Mammary epithelial cell (primary cell): ENCODE measurements at regions of chr2 and their contacts with region 1.

Region 1: GRCh38 chr2:188524519-188525113 is 232.9 kb downstream of the GULP1 start:
- DNase-seq: peak; percentile 28
- H3K4me3 ChIP-seq: no peak overlapping the region
- H3K27ac ChIP-seq: no peak overlapping the region
- H3K4me1 ChIP-seq: no peaks in the 10 kb centered on the region
- H3K27me3 ChIP-seq: no peaks in the 10 kb centered on the region
- CTCF ChIP-seq: peak; percentile 61 to 63

Region 2: DNA sequence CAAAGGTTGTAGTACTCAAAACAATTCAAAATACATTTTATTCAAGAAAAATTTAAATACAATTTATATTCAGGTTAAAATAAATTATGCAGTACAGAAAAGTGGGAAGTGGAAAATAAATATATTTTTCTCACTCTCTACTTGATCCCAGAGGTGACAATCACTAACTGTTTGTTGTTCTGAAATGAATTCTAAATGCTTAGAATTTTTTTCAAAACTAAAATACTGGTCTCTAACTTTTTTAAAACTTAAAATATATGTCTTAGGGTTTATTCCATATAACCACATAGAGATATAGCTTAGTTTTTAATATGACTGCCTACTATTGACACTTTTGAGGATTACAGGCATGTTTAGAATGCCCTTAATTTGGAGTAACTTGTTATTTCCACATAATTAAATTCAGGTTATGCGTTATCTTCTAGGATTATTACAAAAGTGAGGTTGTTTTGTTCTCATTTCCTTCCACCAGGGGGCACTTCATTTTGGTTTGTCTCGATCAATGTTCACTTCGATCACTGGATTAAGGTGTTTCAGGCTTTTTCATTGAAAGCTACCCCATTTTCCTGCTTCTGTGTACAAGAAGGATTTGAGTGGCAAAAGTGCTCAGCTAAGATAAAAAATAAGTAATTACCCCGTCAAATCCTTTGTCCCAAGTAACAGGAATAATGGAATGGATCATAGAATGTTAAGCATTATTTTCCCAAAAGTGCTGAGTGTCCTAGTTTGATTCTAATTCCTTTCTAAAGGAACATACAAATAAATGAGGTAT is 943.3 kb before region 1 on chr2:
- CTCF ChIA-PET with region 1: no interaction called
- dilution Hi-C with region 1: no loop called
- in situ Hi-C with region 1: loop called in 1 of 2 experiments (anchors 25 kb)
- intact Hi-C with region 1: no loop called
- DNase-seq: peak; percentile 27
- H3K4me3 ChIP-seq: peak overlapping the region in 1 of 3 experiments; percentile 40
- H3K27ac ChIP-seq: no peak overlapping the region
- H3K4me1 ChIP-seq: peaks cover 4% of the 10 kb centered on the region
- H3K27me3 ChIP-seq: peaks cover 2% of the 10 kb centered on the region
- CTCF ChIP-seq: peak; percentile 55 to 62

Region 3: DNA sequence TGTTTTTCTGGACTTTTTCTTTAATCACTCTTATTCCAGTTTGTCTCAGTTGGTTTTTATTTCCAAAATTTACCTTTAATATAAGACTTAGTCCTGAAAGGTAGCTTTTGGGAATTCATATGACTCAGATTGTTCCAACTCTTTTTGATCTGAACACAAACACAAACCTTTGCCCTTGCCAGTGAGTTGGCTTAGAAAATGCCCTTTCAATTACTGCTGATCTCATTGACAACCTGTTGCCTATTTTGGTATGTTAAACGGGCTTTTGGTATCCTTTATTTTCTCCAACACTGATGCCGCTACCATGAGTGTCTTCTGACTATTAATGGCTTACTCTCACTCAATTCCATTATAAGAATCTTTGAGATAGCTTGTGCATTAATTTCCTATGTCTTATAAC is 89.5 kb before region 1 on chr2:
- CTCF ChIA-PET with region 1: no interaction called
- dilution Hi-C with region 1: no loop called
- in situ Hi-C with region 1: no loop called
- intact Hi-C with region 1: no loop called
- DNase-seq: no peak
- H3K4me3 ChIP-seq: no peak overlapping the region
- H3K27ac ChIP-seq: no peak overlapping the region
- H3K4me1 ChIP-seq: no peaks in the 10 kb centered on the region
- H3K27me3 ChIP-seq: no peaks in the 10 kb centered on the region
- CTCF ChIP-seq: no peak

Region 4: GRCh38 chr2:188607239-188607883 is 82.7 kb after region 1 on chr2:
- CTCF ChIA-PET with region 1: no interaction called
- dilution Hi-C with region 1: no loop called
- in situ Hi-C with region 1: no loop called
- intact Hi-C with region 1: no loop called
- DNase-seq: no peak
- H3K4me3 ChIP-seq: no peak overlapping the region
- H3K27ac ChIP-seq: no peak overlapping the region
- H3K4me1 ChIP-seq: no peaks in the 10 kb centered on the region
- H3K27me3 ChIP-seq: no peaks in the 10 kb centered on the region
- CTCF ChIP-seq: no peak

Region 5: GRCh38 chr2:188983427-188984064 is 458.9 kb after region 1 on chr2:
- CTCF ChIA-PET with region 1: no interaction called
- dilution Hi-C with region 1: no loop called
- in situ Hi-C with region 1: loop called in 1 of 2 experiments (anchors 10 kb)
- intact Hi-C with region 1: loop called (anchors 1 kb)
- DNase-seq: no peak
- H3K4me3 ChIP-seq: no peak overlapping the region
- H3K27ac ChIP-seq: no peak overlapping the region
- H3K4me1 ChIP-seq: no peaks in the 10 kb centered on the region
- H3K27me3 ChIP-seq: no peaks in the 10 kb centered on the region
- CTCF ChIP-seq: peak; percentile 36 to 39

Region 6: GRCh38 chr2:189096769-189097447 is 572.3 kb after region 1 on chr2:
- CTCF ChIA-PET with region 1: no interaction called
- dilution Hi-C with region 1: no loop called
- in situ Hi-C with region 1: no loop called
- intact Hi-C with region 1: loop called (anchors 5 kb)
- DNase-seq: peak; percentile 60
- H3K4me3 ChIP-seq: no peak overlapping the region
- H3K27ac ChIP-seq: no peak overlapping the region
- H3K4me1 ChIP-seq: peaks cover 6% of the 10 kb centered on the region
- H3K27me3 ChIP-seq: no peaks in the 10 kb centered on the region
- CTCF ChIP-seq: no peak

Region 7: DNA sequence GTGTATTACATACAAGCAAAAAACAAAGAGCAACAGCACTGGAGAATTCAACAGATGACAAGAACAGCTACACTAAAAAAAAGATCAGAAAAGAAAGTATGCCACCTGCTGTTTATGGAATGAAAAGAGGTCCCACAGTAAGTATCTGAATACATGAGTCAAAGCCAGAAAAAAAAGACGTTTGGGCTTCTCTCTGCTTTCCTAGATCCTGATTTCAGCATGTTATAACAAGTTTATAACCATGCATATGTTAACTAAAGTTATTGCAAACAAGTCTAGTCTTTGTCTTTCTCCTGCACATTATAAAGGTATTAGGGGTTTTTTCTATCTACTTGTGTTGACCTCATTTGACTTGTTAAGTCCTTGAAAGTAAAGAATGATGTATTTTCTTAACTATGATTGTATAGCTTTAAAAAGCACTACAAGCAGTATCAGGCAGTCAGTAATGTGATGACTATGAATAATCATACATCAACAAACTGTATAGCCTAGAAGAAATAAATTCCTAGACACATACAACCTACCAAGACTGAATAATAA is 763.4 kb after region 1 on chr2:
- CTCF ChIA-PET with region 1: no interaction called
- dilution Hi-C with region 1: no loop called
- in situ Hi-C with region 1: no loop called
- intact Hi-C with region 1: loop called (anchors 2 kb)
- DNase-seq: peak; percentile 95
- H3K4me3 ChIP-seq: no peak overlapping the region
- H3K27ac ChIP-seq: peak overlapping the region; percentile 76
- H3K4me1 ChIP-seq: peaks cover 19% of the 10 kb centered on the region
- H3K27me3 ChIP-seq: no peaks in the 10 kb centered on the region
- CTCF ChIP-seq: peak; percentile 48 to 63

Region 8: GRCh38 chr2:189412330-189412953 is 887.8 kb after region 1 on chr2:
- CTCF ChIA-PET with region 1: no interaction called
- dilution Hi-C with region 1: no loop called
- in situ Hi-C with region 1: loop called in 1 of 2 experiments (anchors 25 kb)
- intact Hi-C with region 1: loop called (anchors 1 kb)
- DNase-seq: no peak
- H3K4me3 ChIP-seq: no peak overlapping the region
- H3K27ac ChIP-seq: no peak overlapping the region
- H3K4me1 ChIP-seq: peaks cover 18% of the 10 kb centered on the region
- H3K27me3 ChIP-seq: no peaks in the 10 kb centered on the region
- CTCF ChIP-seq: peak; percentile 63 to 74